ENCODE measurements at regions of chr12 and their contacts with region 1.

Region 1: DNA sequence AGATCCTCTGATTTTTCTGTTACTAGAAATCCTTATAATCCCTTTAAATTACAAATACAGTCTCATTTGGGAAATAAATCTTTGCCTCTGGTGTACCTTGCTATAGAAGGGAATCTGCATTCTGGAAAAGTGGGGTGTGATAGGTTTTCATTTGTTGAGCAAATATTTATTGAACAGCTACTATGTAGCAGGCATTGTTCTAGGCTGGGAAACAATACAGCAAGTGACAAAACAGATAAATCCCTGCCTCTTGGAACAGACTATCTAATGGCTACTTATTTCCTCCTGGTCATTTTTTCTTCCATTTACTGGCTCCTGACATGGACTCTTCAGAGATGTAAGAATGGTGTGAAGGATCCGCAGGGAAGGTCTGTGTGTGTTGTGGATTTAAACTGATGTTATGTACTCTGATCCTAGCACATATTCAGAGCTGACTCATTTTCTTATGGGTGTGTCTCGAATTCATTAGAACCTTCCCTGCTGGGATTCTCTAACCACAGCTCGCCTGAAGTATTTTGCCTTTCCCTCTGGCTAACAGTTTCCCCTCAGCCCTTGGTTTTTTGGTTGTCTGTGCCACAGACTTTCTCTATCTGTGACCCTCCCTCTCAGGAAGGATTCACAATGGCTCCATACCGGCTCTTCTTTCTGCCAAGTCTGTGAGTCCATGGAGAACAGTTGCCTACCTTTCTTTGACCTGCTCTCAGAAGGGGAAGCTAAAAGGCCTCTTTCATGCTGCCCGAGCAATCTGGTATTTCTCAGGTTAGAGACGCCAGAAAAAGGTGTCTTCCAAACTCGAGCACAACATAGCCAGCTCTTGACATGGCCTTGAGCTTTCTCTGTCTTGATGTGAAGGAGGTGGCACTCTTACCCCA is 53.7 kb downstream of the TMTC2 start:
- DNase-seq: peak; percentile 82
- ATAC-seq: peak; percentile 99
- H3K4me3 ChIP-seq: no peak overlapping the region
- H3K27ac ChIP-seq: peak overlapping the region; percentile 58
- H3K4me1 ChIP-seq: peaks cover 15% of the 10 kb centered on the region
- H3K27me3 ChIP-seq: no peaks in the 10 kb centered on the region
- CTCF ChIP-seq: no peak

Region 2: GRCh38 chr12:82672811-82673495 is 67.4 kb before region 1 on chr12:
- CTCF ChIA-PET with region 1: no interaction called
- POLR2A ChIA-PET with region 1: no interaction called
- intact Hi-C with region 1: no loop called
- DNase-seq: peak; percentile 46
- ATAC-seq: no peak
- H3K4me3 ChIP-seq: no peak overlapping the region
- H3K27ac ChIP-seq: peak overlapping the region; percentile 59; the same call in 1 of the 2 replicates
- H3K4me1 ChIP-seq: peaks cover 28% of the 10 kb centered on the region
- H3K27me3 ChIP-seq: no peaks in the 10 kb centered on the region
- CTCF ChIP-seq: no peak

Region 3: DNA sequence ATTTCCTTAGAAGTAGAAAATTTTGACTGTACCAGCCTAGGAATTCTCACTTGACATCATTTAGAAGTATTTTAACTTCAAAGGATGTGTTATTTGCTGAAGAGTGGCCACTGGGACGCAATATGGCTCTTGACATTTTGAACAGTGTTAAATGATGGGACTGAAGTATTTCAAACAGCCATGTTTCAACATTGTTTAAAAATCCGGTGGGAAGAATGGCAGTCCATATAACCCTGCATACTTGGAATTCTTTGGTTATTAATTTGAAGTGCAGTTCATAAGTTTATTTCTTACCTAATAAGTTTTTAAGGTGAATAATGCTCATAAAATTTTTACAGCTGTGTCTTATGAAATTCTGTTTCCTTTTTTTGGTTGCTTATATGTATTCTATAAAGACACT is 45.4 kb before region 1 on chr12:
- CTCF ChIA-PET with region 1: no interaction called
- POLR2A ChIA-PET with region 1: no interaction called
- intact Hi-C with region 1: loop called (anchors 5 kb)
- DNase-seq: peak; percentile 80
- ATAC-seq: peak; percentile 74
- H3K4me3 ChIP-seq: peak overlapping the region; percentile 11; the same call in 1 of the 2 replicates
- H3K27ac ChIP-seq: peak overlapping the region; percentile 9; the same call in 1 of the 2 replicates
- H3K4me1 ChIP-seq: peaks cover 26% of the 10 kb centered on the region
- H3K27me3 ChIP-seq: no peaks in the 10 kb centered on the region
- CTCF ChIP-seq: no peak

Region 4: GRCh38 chr12:82723093-82723492 is 17.3 kb before region 1 on chr12:
- CTCF ChIA-PET with region 1: no interaction called
- POLR2A ChIA-PET with region 1: interaction called, 14 read pairs
- intact Hi-C with region 1: no loop called
- DNase-seq: no peak
- ATAC-seq: no peak
- H3K4me3 ChIP-seq: no peak overlapping the region
- H3K27ac ChIP-seq: no peak overlapping the region
- H3K4me1 ChIP-seq: no peaks in the 10 kb centered on the region
- H3K27me3 ChIP-seq: no peaks in the 10 kb centered on the region
- CTCF ChIP-seq: no peak

Measured in PC-3 (cell line).